OCI-LY7 (cell line): ENCODE measurements at regions of chr4 and their contacts with region 1.

Region 1: GRCh38 chr4:145279122-145279960 is 99.0 kb upstream of the OTUD4 start:
- DNase-seq: no peak
- H3K4me3 ChIP-seq: no peak overlapping the region
- H3K27ac ChIP-seq: no peak overlapping the region
- H3K4me1 ChIP-seq: no peaks in the 10 kb centered on the region
- CTCF ChIP-seq: no peak

Region 2: DNA sequence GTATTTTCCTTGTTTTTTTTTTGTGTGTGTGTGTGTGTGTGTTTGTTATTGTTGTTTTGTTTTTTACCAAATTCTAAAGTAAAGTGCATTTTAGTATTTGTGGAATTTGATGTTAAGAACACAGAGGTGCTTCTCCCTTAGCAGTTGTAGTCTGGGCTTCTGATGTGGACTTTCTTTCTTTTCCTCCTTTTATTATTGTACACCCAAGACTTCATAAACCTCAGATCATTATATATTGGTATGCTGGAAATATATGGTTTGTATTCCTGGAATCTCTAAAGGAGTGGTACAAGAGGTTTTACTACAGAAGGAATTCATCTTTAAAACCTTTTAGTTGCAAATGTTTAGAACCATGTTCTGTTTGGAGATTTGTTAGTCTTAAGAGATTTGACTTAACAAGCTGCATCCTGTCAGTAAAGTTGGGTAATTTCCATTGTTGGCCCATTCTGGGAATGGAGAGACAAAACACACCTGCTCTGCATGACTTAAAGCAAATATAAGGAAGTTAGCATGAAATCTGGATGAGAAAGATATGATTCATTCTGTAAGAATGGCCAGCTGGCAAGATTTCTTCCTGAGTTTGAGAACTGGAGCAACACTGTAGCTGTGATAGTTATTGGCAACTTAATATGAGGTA is 266.3 kb after region 1 on chr4:
- CTCF ChIA-PET with region 1: no interaction called
- POLR2A ChIA-PET with region 1: no interaction called
- intact Hi-C with region 1: loop called (anchors 1 kb)
- DNase-seq: no peak
- H3K4me3 ChIP-seq: no peak overlapping the region
- H3K27ac ChIP-seq: no peak overlapping the region
- H3K4me1 ChIP-seq: peaks cover 39% of the 10 kb centered on the region
- CTCF ChIP-seq: no peak

Region 3: GRCh38 chr4:145868637-145869409 is 589.5 kb after region 1 on chr4:
- CTCF ChIA-PET with region 1: no interaction called
- POLR2A ChIA-PET with region 1: no interaction called
- intact Hi-C with region 1: no loop called
- DNase-seq: peak; percentile 24
- H3K4me3 ChIP-seq: no peak overlapping the region
- H3K27ac ChIP-seq: no peak overlapping the region
- H3K4me1 ChIP-seq: no peaks in the 10 kb centered on the region
- CTCF ChIP-seq: peak; percentile 64